ENCODE measurements at regions of chr3 and their contacts with region 1.

Region 1: GRCh38 chr3:29186982-29187725 is 93.7 kb upstream of the RBMS3 start:
- DNase-seq: peak; percentile 99
- ATAC-seq: peak; percentile 79
- H3K4me3 ChIP-seq: no peak overlapping the region; the same call in 1 of the 2 replicates
- H3K27ac ChIP-seq: peak overlapping the region; percentile 98
- H3K4me1 ChIP-seq: peaks cover 45% of the 10 kb centered on the region
- H3K27me3 ChIP-seq: no peaks in the 10 kb centered on the region
- CTCF ChIP-seq: no peak

Region 2: GRCh38 chr3:29202378-29202777 is 15.2 kb after region 1 on chr3:
- CTCF ChIA-PET with region 1: no interaction called
- POLR2A ChIA-PET with region 1: no interaction called
- intact Hi-C with region 1: loop called (anchors 1 kb)
- DNase-seq: peak; percentile 84
- ATAC-seq: peak; percentile 88
- H3K4me3 ChIP-seq: no peak overlapping the region
- H3K27ac ChIP-seq: peak overlapping the region; percentile 21
- H3K4me1 ChIP-seq: peaks cover 24% of the 10 kb centered on the region
- H3K27me3 ChIP-seq: no peaks in the 10 kb centered on the region
- CTCF ChIP-seq: no peak

Region 3: DNA sequence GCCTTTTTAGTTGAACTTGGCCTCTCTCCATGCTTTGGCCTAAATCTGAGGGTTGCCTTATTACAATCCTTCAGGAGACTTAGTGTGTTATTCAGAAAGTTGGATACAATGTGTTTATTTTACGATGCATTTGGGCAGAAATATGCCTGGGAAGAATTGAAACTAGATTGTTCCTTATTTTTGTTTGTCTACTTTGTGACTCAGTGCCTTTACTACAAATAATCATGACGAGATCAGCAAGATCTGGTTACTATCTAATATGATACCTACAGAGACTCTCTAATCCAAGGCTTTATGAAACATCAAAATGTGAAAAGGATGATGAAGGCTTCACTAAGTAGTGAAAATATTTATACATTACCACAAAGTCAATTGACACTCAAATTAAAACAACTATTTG is 176.0 kb after region 1 on chr3:
- CTCF ChIA-PET with region 1: no interaction called
- POLR2A ChIA-PET with region 1: no interaction called
- intact Hi-C with region 1: no loop called
- DNase-seq: peak; percentile 51
- ATAC-seq: peak; percentile 64
- H3K4me3 ChIP-seq: no peak overlapping the region
- H3K27ac ChIP-seq: peak overlapping the region; percentile 50
- H3K4me1 ChIP-seq: peaks cover 7% of the 10 kb centered on the region
- H3K27me3 ChIP-seq: no peaks in the 10 kb centered on the region
- CTCF ChIP-seq: no peak

Region 4: DNA sequence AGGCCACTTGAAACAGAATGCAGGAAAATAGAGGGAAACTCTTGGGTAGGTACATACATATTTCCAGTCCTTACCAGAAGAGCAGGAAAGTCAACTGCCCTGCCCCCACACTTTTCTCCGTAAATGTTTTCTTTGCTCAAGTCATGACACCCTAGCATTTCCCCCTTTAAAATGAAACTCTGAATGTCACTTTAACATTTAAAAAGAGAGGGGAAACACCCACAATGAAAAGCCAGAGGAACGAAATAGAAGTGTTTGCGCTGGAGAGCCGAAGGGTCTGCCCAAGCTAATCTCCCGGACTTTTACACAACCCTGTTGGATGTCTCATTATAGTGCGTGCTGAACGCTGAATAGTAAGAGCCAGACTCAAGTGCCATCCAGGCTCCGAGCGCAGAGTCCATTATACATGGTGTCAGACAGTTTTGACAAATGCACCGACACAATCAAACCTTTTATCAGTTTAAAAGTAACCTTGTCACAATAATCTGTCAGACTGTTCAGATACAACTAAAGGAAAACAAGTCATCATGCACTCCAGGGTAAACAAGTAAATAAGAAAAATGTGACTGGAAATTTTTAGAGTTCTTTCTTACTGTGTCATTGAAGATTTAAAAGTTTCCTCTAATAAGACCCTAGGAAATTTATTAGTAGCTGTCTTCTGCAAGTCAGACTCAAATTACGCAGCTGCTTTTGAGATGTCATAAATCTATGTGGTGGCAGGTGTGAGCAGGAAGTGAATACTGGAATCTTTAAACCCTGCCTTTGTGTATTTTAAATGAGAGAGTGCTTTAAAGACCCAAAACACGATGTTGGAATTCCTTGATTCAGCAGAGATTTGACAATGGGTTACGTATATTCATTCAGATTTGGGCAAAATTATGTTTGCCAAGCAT is 253.5 kb after region 1 on chr3:
- CTCF ChIA-PET with region 1: no interaction called
- POLR2A ChIA-PET with region 1: interaction called, 5 read pairs
- intact Hi-C with region 1: loop called (anchors 5 kb)
- DNase-seq: peak; percentile 31
- ATAC-seq: peak; percentile 77
- H3K4me3 ChIP-seq: peak overlapping the region; percentile 49
- H3K27ac ChIP-seq: no peak overlapping the region
- H3K4me1 ChIP-seq: peaks cover 30% of the 10 kb centered on the region
- H3K27me3 ChIP-seq: no peaks in the 10 kb centered on the region
- CTCF ChIP-seq: no peak

Region 5: GRCh38 chr3:29605845-29606244 is 418.7 kb after region 1 on chr3:
- CTCF ChIA-PET with region 1: no interaction called
- POLR2A ChIA-PET with region 1: no interaction called
- intact Hi-C with region 1: loop called (anchors 2 kb)
- DNase-seq: peak; percentile 18
- ATAC-seq: no peak
- H3K4me3 ChIP-seq: no peak overlapping the region
- H3K27ac ChIP-seq: no peak overlapping the region
- H3K4me1 ChIP-seq: peaks cover 23% of the 10 kb centered on the region
- H3K27me3 ChIP-seq: no peaks in the 10 kb centered on the region
- CTCF ChIP-seq: no peak